ENCODE measurements at regions of chr2 and their contacts with region 1.

Region 1: GRCh38 chr2:85813982-85814801 is 60.4 kb downstream of the ATOH8 start:
- DNase-seq: peak; percentile 82
- H3K4me3 ChIP-seq: no peak overlapping the region
- H3K27ac ChIP-seq: no peak overlapping the region
- H3K4me1 ChIP-seq: no peaks in the 10 kb centered on the region
- H3K27me3 ChIP-seq: no peaks in the 10 kb centered on the region
- CTCF ChIP-seq: peak; percentile 97 to 98
- POLR2A ChIP-seq: no peak

Region 2: DNA sequence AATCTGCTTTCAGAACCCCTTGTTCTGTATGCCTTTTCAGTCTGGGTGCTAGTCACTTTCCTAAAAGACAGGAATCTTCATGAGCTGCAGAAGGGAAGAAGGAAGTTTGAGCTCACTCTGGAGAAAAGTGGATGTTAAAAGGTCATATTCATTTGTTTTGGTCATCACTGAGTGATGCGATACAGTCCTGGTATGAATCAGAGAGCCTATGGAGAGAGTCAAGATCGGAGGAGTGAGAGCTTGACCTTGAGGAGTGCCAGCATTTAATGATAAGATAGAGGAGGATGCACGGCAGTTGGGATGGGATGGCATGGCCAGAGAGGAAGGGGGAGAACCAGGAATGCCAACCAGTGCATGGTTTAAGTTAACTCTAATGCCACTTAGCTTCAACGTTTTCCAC is 178.6 kb before region 1 on chr2:
- CTCF ChIA-PET with region 1: interaction called, 59 read pairs
- POLR2A ChIA-PET with region 1: no interaction called
- dilution Hi-C with region 1: no loop called
- intact Hi-C with region 1: no loop called
- DNase-seq: no peak
- H3K4me3 ChIP-seq: no peak overlapping the region
- H3K27ac ChIP-seq: no peak overlapping the region
- H3K4me1 ChIP-seq: no peaks in the 10 kb centered on the region
- H3K27me3 ChIP-seq: no peaks in the 10 kb centered on the region
- CTCF ChIP-seq: no peak
- POLR2A ChIP-seq: no peak

Region 3: GRCh38 chr2:85648619-85649018 is 165.6 kb before region 1 on chr2:
- CTCF ChIA-PET with region 1: interaction called, 89 read pairs
- POLR2A ChIA-PET with region 1: no interaction called
- dilution Hi-C with region 1: no loop called
- intact Hi-C with region 1: loop called (anchors 1 kb)
- DNase-seq: peak; percentile 66
- H3K4me3 ChIP-seq: no peak overlapping the region
- H3K27ac ChIP-seq: peak overlapping the region; percentile 42
- H3K4me1 ChIP-seq: peaks cover 16% of the 10 kb centered on the region
- H3K27me3 ChIP-seq: no peaks in the 10 kb centered on the region
- CTCF ChIP-seq: peak; percentile 65 to 72
- POLR2A ChIP-seq: no peak

Region 4: GRCh38 chr2:85707304-85707703 is 106.9 kb before region 1 on chr2:
- CTCF ChIA-PET with region 1: interaction called, 7 read pairs
- POLR2A ChIA-PET with region 1: no interaction called
- dilution Hi-C with region 1: loop called (anchors 25 kb)
- intact Hi-C with region 1: no loop called
- DNase-seq: peak; percentile 81
- H3K4me3 ChIP-seq: no peak overlapping the region
- H3K27ac ChIP-seq: no peak overlapping the region
- H3K4me1 ChIP-seq: peaks cover 18% of the 10 kb centered on the region
- H3K27me3 ChIP-seq: no peaks in the 10 kb centered on the region
- CTCF ChIP-seq: peak; percentile 77 to 87
- POLR2A ChIP-seq: no peak

Region 5: DNA sequence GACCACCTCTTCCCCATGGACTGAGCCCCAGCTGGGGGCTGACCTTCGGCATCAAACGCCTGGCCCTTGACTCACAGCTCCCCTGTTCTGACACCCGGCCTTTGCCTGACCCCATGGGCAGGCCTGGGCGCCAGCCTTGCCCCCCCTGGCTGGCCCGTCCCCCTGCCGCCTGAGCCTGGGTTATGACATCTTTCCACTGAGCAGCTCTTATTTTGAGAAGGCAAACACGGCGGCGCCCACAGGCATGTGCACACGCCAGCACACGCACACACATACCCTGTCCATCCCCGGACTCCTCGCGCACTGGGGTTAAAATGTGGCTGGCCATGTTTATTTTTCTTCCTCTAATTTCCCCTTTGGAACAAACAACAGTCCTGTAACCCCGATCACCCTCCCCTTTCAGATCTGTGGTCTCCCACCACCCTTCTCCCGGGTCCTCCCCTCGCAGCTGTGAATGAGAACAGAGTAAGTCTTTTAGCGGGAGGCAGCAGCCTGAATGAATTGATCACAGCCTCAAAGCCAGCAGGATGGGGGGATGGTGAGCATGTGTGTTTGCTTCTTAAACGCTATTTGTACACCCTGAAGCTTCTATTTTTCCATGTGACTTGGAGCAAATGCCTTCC is 72.2 kb before region 1 on chr2:
- CTCF ChIA-PET with region 1: interaction called, 15 read pairs
- POLR2A ChIA-PET with region 1: no interaction called
- dilution Hi-C with region 1: no loop called
- intact Hi-C with region 1: no loop called
- DNase-seq: peak; percentile 87
- H3K4me3 ChIP-seq: peak overlapping the region in 1 of 3 experiments; percentile 3
- H3K27ac ChIP-seq: peak overlapping the region; percentile 97
- H3K4me1 ChIP-seq: peaks cover 30% of the 10 kb centered on the region
- H3K27me3 ChIP-seq: no peaks in the 10 kb centered on the region
- CTCF ChIP-seq: no peak
- POLR2A ChIP-seq: no peak

Region 6: GRCh38 chr2:85772019-85772745 is 42.0 kb before region 1 on chr2:
- CTCF ChIA-PET with region 1: interaction called, 23 read pairs
- POLR2A ChIA-PET with region 1: no interaction called
- dilution Hi-C with region 1: no loop called
- intact Hi-C with region 1: no loop called
- DNase-seq: peak; percentile 100
- H3K4me3 ChIP-seq: no peak overlapping the region
- H3K27ac ChIP-seq: peak overlapping the region; percentile 100
- H3K4me1 ChIP-seq: peaks cover 38% of the 10 kb centered on the region
- H3K27me3 ChIP-seq: no peaks in the 10 kb centered on the region
- CTCF ChIP-seq: peak; percentile 32 to 42
- POLR2A ChIP-seq: peak; percentile 55